ENCODE measurements at regions of chr13 and their contacts with region 1.

Region 1: GRCh38 chr13:39942552-39943273 is 287.3 kb downstream of the COG6 start:
- DNase-seq: peak; percentile 80
- ATAC-seq: peak; percentile 100
- H3K4me3 Mint-ChIP-seq: no peak overlapping the region
- H3K27ac Mint-ChIP-seq: no peak overlapping the region
- H3K4me1 Mint-ChIP-seq: peaks cover 10% of the 10 kb centered on the region
- H3K27me3 Mint-ChIP-seq: no peaks in the 10 kb centered on the region
- CTCF ChIP-seq: peak; percentile 100

Region 2: DNA sequence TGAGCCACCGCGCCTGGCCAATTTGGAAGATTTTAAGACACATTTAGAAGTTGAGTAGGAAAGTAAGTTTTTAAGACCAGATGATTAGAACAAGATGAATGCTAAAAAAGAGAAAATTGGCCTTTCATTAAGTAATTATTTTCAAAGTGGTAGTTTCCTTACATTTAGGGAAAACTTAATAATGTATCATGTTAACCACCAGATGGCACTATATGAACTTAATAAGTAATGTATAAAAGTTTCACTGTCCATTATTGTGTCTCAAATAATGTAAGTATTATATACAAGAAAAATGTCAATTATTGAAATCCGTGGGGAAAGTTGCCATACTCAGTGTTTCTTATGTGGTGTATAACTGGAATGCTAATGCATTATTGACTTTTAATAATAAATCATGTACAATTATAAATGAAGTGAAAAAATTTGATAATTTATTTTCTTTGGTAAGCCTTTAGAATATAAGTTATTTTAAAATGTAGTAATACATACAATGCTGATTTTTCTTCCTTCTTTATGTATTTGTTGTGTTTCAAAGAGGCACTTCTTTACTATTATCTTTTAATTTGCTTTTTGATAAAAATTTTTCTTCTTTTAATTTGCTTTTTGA is 258.1 kb before region 1 on chr13:
- CTCF ChIA-PET with region 1: interaction called, 6 read pairs
- POLR2A ChIA-PET with region 1: no interaction called
- intact Hi-C with region 1: loop called (anchors 10 kb)
- DNase-seq: no peak
- ATAC-seq: no peak
- H3K4me3 Mint-ChIP-seq: no peak overlapping the region
- H3K27ac Mint-ChIP-seq: no peak overlapping the region
- H3K4me1 Mint-ChIP-seq: peaks cover 21% of the 10 kb centered on the region
- H3K27me3 Mint-ChIP-seq: no peaks in the 10 kb centered on the region
- CTCF ChIP-seq: peak; percentile 59

Region 3: GRCh38 chr13:39913928-39914327 is 28.8 kb before region 1 on chr13:
- CTCF ChIA-PET with region 1: interaction called, 10 read pairs
- POLR2A ChIA-PET with region 1: no interaction called
- intact Hi-C with region 1: no loop called
- DNase-seq: no peak
- ATAC-seq: no peak
- H3K4me3 Mint-ChIP-seq: no peak overlapping the region
- H3K27ac Mint-ChIP-seq: no peak overlapping the region
- H3K4me1 Mint-ChIP-seq: peaks cover 8% of the 10 kb centered on the region
- H3K27me3 Mint-ChIP-seq: peaks cover 4% of the 10 kb centered on the region
- CTCF ChIP-seq: no peak

Region 4: GRCh38 chr13:39959497-39960144 is 16.9 kb after region 1 on chr13:
- CTCF ChIA-PET with region 1: interaction called, 62 read pairs
- POLR2A ChIA-PET with region 1: no interaction called
- intact Hi-C with region 1: no loop called
- DNase-seq: no peak
- ATAC-seq: no peak
- H3K4me3 Mint-ChIP-seq: no peak overlapping the region
- H3K27ac Mint-ChIP-seq: no peak overlapping the region
- H3K4me1 Mint-ChIP-seq: peaks cover 43% of the 10 kb centered on the region
- H3K27me3 Mint-ChIP-seq: no peaks in the 10 kb centered on the region
- CTCF ChIP-seq: no peak

Region 5: DNA sequence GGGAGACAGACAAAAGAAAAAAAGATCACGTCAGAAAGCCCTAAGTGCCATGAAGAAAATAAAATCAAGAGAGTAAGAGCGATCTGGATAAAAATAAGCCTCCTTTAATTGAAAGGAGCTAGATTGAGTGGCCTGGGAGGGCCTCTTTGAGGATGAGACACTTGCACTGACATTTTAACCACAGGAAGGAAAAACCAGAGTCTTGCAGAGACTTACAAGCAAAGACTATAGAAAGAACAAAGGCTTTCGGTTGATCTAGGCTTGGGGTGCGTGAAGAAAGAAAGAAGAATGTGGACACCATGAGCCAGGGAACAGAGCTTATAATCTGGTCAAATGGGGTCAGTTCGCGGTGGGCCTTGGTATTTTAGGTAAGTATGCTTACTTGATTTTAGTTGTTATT is 55.5 kb after region 1 on chr13:
- CTCF ChIA-PET with region 1: interaction called, 11 read pairs
- POLR2A ChIA-PET with region 1: no interaction called
- intact Hi-C with region 1: no loop called
- DNase-seq: peak; percentile 48
- ATAC-seq: peak; percentile 98
- H3K4me3 Mint-ChIP-seq: peak overlapping the region; percentile 12
- H3K27ac Mint-ChIP-seq: peak overlapping the region; percentile 50
- H3K4me1 Mint-ChIP-seq: peaks cover 22% of the 10 kb centered on the region
- H3K27me3 Mint-ChIP-seq: peaks cover 2% of the 10 kb centered on the region
- CTCF ChIP-seq: no peak

Region 6: DNA sequence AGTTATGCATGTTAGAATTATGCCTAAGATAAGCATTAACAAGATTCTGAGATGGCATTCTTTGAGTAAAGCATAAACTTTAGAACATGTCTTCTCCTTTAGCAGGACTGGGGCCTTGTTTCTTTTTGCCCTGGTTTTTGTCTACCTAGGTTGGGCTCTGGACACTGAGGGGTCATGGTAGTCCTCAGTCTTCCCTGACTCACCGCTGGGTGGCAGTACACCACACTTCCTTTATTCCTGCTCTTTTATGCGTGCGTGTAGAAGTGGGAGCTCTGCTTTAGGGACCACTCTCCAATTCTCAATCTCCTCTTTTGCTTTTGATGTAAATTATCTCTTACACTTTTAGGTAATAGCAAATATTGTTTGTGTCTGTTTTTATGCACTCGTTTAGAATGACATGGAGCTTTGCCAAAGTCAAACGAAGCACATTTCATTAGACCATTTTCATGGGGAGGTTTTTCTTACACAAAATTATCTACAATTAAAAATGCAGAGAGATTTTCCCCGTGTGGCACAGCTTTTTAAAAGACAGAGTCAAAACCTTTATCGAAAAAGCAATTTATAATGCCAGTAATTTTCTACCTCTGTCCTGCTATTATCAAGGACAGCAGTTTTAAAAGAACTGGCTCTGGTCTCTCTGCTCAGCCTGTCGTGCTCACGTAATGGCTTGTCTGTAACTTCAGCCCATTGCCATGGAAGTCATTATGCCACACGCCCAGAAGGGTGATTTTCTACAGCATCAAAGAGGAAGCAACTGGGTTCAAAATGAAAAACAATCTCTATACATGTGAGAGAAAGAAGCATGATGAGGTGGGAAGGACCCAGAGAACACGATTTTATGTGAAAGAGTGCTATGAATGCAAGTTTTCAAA is 126.7 kb after region 1 on chr13:
- CTCF ChIA-PET with region 1: interaction called, 21 read pairs
- POLR2A ChIA-PET with region 1: no interaction called
- intact Hi-C with region 1: no loop called
- DNase-seq: peak; percentile 81
- ATAC-seq: peak; percentile 87
- H3K4me3 Mint-ChIP-seq: no peak overlapping the region
- H3K27ac Mint-ChIP-seq: peak overlapping the region; percentile 66
- H3K4me1 Mint-ChIP-seq: peaks cover 25% of the 10 kb centered on the region
- H3K27me3 Mint-ChIP-seq: no peaks in the 10 kb centered on the region
- CTCF ChIP-seq: peak; percentile 78